ENCODE measurements at regions of chr11 and their contacts with region 1.

Region 1: DNA sequence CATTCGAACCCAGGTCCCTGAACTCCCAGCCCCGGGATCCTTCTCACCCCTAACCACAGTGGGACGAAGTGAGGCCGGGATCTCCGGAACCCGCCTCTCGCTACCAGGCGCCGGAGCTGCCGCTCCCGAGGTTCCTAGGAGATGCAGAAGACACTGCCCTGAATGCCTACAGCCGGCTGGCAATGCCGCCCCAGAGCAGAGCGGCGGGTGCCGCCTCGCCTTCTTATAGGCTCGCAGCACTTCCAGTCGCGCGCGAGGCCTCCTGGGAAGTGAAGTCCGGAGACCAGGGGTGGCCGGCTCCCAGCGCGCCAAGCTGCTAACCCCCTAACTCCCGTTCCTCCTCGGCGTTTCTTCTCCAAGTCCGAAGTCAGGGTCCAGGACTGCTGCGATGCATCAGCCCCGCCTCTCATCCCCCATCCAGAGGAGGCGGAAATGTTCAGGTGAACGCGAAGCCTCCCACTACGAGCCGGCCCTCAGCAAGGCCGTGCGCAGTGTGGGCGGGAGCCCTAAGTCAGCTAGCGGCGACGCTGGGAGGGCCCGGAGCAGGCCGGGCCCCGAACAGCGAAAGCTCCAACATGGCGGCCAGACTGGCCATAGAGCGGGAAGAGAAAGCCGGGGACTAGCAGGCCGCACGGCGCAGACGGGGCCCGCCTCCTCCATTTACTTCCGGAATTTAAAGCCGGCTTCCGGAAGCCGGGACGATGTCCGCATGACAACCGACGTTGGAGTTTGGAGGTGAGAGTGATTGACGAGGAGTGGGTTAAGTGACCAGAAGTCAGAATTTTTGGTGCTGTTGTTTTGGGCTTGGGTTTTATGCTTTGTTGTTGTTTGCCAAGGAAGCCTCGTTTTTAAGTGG is at the starts of genes CYB561A3 and TMEM138:
- DNase-seq: peak; percentile 77 to 96
- H3K4me3 ChIP-seq: peak within 1 kb of the TSS; percentile 77 to 78
- H3K27ac ChIP-seq: peak within 1 kb of the TSS; percentile 96 to 98
- H3K4me1 ChIP-seq: peaks cover 0 to 9% of the 10 kb centered on the region in 2 donors
- H3K27me3 ChIP-seq: no peaks in the 10 kb centered on the region
- CTCF ChIP-seq: no peak
- total RNA-seq, gene CYB561A3: 215 TPM
- total RNA-seq, gene TMEM138: 44.9 TPM

Region 2: GRCh38 chr11:60810569-60810968 is 551.3 kb before region 1 on chr11:
- intact Hi-C with region 1: no loop called
- DNase-seq: no peak
- H3K4me3 ChIP-seq: no peak overlapping the region
- H3K27ac ChIP-seq: no peak overlapping the region
- H3K4me1 ChIP-seq: no peaks in the 10 kb centered on the region
- H3K27me3 ChIP-seq: no peaks in the 10 kb centered on the region
- CTCF ChIP-seq: no peak

Region 3: GRCh38 chr11:61281581-61282250 is 80.2 kb before region 1 on chr11:
- intact Hi-C with region 1: no loop called
- DNase-seq: no peak
- H3K4me3 ChIP-seq: no peak overlapping the region
- H3K27ac ChIP-seq: no peak overlapping the region
- H3K4me1 ChIP-seq: no peaks in the 10 kb centered on the region
- H3K27me3 ChIP-seq: no peaks in the 10 kb centered on the region
- CTCF ChIP-seq: no peak

Region 4: DNA sequence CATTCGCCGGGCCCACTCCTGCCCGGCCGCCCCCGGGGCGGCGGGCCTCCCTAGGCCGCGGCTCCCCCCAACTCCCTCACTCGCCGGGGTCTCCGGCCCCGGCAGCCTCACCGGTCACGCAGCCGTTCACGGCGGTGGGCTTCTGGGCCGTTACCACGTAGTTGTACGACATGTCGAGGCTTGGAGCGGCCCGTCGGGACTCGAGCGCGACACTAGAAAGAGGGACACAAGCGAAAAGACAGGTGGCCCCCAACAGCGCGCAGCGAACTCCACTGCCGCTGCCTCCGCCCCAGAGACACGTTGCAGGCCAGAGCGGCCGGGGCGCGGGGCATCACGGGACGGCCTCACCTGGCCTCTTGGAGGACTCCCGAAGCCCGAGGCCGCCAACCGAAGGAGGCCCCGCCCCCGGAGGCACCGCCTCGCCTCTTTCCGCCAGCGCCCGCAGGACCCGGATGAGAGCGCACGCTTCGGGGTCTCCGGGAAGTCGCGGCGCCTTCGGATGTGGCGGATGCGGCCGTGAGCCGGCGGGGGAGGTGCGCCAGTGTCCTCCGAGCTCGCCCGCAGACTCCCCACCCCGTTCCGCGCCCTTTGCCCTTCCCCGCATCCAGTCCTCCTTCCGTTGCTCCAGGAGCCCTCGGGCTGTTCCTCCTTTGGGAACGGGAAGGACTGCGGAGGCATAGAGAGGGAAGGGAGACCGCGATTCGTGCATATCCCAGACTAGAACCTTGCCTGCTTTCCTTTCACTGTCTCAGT is 28.9 kb before region 1 on chr11 and contains the starts of genes DDB1 and TKFC:
- intact Hi-C with region 1: loop called (anchors 1 kb)
- DNase-seq: peak; percentile 72 to 97
- H3K4me3 ChIP-seq: peak within 1 kb of the TSS; percentile 97 to 98
- H3K27ac ChIP-seq: peak within 1 kb of the TSS; percentile 92 to 93
- H3K4me1 ChIP-seq: peaks cover 0 to 20% of the 10 kb centered on the region in 2 donors
- H3K27me3 ChIP-seq: no peaks in the 10 kb centered on the region
- CTCF ChIP-seq: no peak
- total RNA-seq, gene DDB1: 130 TPM
- total RNA-seq, gene TKFC: 7.3 TPM

Region 5: DNA sequence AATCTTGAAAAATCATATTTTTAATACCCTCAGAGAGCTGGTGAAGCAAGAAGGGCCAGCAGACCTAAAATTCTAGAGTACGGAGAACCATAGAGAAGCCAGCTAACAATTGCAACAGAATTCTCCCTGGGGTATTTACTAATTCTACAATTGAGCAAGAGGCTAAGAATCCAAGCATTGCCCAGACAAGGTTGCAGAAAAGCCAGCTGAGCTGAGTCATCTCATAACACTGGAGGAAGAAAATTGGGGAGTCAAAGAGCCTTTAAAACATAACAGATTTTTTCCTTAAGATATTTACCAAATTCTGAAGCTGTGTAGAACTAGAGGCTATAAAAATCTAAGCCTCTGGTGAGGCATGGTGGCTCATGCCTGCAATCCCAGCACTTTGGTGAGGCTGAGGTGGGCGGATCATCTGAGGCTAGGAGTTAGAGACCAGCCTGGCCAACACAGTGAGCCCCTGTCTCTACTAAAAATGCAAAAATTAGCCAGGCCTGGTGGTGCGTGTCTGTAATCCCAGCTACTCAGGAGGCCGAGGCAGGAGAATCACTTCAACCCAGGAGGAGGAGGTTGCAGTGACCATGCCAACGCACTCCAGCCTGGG is 16.9 kb after region 1 on chr11:
- intact Hi-C with region 1: loop called (anchors 1 kb)
- DNase-seq: peak in 1 of 2 donors; percentile 85
- H3K4me3 ChIP-seq: no peak overlapping the region
- H3K27ac ChIP-seq: peak overlapping the region; percentile 81 to 88
- H3K4me1 ChIP-seq: peaks cover 0 to 15% of the 10 kb centered on the region in 2 donors
- H3K27me3 ChIP-seq: no peaks in the 10 kb centered on the region
- CTCF ChIP-seq: no peak

Region 6: GRCh38 chr11:61384271-61385242 is 22.6 kb after region 1 on chr11:
- intact Hi-C with region 1: loop called (anchors 2 kb)
- DNase-seq: no peak
- H3K4me3 ChIP-seq: no peak overlapping the region
- H3K27ac ChIP-seq: no peak overlapping the region
- H3K4me1 ChIP-seq: peaks cover 0 to 5% of the 10 kb centered on the region in 2 donors
- H3K27me3 ChIP-seq: no peaks in the 10 kb centered on the region
- CTCF ChIP-seq: no peak

Measured in ascending aorta (tissue), 2 donors.